WTC11 (cell line): ENCODE measurements at regions of chr17 and their contacts with region 1.

Region 1: DNA sequence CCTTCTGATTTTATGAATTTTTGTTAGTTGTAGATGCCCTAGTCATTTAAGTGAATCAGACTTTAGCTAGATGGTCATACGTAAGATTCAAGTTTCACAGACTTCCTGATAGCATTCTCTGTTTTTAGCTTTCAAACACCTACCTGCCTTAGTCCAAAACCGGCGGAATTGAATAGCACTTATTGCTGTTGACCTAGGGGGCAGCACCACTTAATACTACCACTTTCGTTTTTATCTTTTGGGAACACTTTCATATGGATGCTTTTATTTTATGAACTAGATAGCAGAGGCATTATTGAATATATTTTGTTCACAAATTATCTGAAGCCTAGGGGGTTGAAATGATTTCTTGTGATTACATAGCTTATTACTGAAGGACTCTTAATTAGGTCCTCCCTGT is 31.5 kb downstream of the TADA2A start:
- DNase-seq: no peak
- ATAC-seq: peak; percentile 22; the same call in 1 of the 2 replicates
- H3K4me3 Mint-ChIP-seq: no peak overlapping the region
- H3K27ac Mint-ChIP-seq: peak overlapping the region; percentile 92
- H3K4me1 Mint-ChIP-seq: no peaks in the 10 kb centered on the region
- H3K27me3 Mint-ChIP-seq: no peaks in the 10 kb centered on the region
- CTCF ChIP-seq: no peak

Region 2: GRCh38 chr17:37422971-37423625 is 15.0 kb before region 1 on chr17:
- CTCF ChIA-PET with region 1: interaction called, 11 read pairs
- POLR2A ChIA-PET with region 1: no interaction called
- DNase-seq: no peak
- ATAC-seq: no peak
- H3K4me3 Mint-ChIP-seq: no peak overlapping the region
- H3K27ac Mint-ChIP-seq: peak overlapping the region; percentile 26; the same call in 1 of the 2 replicates
- H3K4me1 Mint-ChIP-seq: no peaks in the 10 kb centered on the region
- H3K27me3 Mint-ChIP-seq: no peaks in the 10 kb centered on the region
- CTCF ChIP-seq: no peak

Region 3: GRCh38 chr17:37458805-37459204 is 20.7 kb after region 1 on chr17:
- CTCF ChIA-PET with region 1: interaction called, 13 read pairs
- POLR2A ChIA-PET with region 1: no interaction called
- DNase-seq: no peak
- ATAC-seq: no peak
- H3K4me3 Mint-ChIP-seq: no peak overlapping the region
- H3K27ac Mint-ChIP-seq: no peak overlapping the region
- H3K4me1 Mint-ChIP-seq: peaks cover 14% of the 10 kb centered on the region
- H3K27me3 Mint-ChIP-seq: no peaks in the 10 kb centered on the region
- CTCF ChIP-seq: no peak

Region 4: GRCh38 chr17:37585066-37585465 is 146.9 kb after region 1 on chr17:
- CTCF ChIA-PET with region 1: no interaction called
- POLR2A ChIA-PET with region 1: no interaction called
- DNase-seq: no peak
- ATAC-seq: no peak
- H3K4me3 Mint-ChIP-seq: no peak overlapping the region
- H3K27ac Mint-ChIP-seq: no peak overlapping the region
- H3K4me1 Mint-ChIP-seq: no peaks in the 10 kb centered on the region
- H3K27me3 Mint-ChIP-seq: no peaks in the 10 kb centered on the region
- CTCF ChIP-seq: no peak